ENCODE measurements at regions of chr9 and their contacts with region 1.

Region 1: DNA sequence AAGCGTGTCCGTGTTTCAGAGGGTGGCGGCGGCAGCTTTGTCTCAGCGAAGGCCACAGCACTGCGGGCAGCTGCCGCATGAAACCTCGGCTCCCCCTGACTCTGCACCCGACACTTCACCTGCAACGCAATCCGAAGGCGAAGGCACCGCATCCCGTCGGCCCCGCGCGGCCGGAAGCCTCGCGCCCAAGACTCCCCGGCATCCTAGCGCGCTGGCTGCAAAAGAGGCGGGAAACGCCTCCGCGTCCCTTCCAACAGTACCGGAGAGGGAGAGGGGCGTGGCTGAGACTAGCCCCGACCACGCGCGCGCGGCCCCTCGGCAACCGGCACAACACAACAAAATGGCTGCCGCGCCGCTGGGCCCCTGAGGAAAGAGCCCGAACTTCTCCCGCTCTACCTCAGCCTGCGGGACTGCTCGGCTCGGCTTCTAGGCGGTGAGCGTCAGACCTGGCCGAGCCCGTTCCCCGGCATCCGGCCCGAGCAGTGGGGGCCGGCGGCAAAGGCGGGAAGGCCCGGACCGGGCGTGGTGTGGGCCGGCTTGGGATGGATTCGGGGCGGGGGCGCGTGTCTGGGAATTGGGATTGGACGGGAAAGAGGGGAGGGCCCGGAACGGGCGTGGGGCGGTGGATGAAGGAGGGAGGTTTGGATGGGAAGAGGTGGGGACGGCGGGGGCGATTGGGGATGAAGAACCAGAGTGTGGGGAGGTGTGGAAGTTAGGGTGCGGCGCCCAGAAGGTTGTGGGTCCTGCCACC is at the start of gene CNTRL:
- DNase-seq: peak; percentile 54 to 93 (median 78)
- ATAC-seq: peak; percentile 81
- H3K4me3 ChIP-seq: peak within 1 kb of the TSS; percentile 92
- H3K4me3 Mint-ChIP-seq: peak within 1 kb of the TSS; percentile 89
- H3K27ac ChIP-seq: peak within 1 kb of the TSS; percentile 75 to 81
- H3K27ac Mint-ChIP-seq: peak within 1 kb of the TSS; percentile 98
- H3K4me1 ChIP-seq: peaks cover 30% of the 10 kb centered on the region
- H3K4me1 Mint-ChIP-seq: peaks cover 54% of the 10 kb centered on the region
- H3K27me3 ChIP-seq: no peaks in the 10 kb centered on the region
- H3K27me3 Mint-ChIP-seq: no peaks in the 10 kb centered on the region
- CTCF ChIP-seq: no peak
- total RNA-seq, gene CNTRL: 35.1 to 38.1 TPM

Region 2: GRCh38 chr9:120807607-120808379 is 267.0 kb before region 1 on chr9:
- CTCF ChIA-PET with region 1: no interaction called
- POLR2A ChIA-PET with region 1: no interaction called
- intact Hi-C with region 1: no loop called
- DNase-seq: no peak
- ATAC-seq: no peak
- H3K4me3 ChIP-seq: no peak overlapping the region
- H3K4me3 Mint-ChIP-seq: no peak overlapping the region
- H3K27ac ChIP-seq: no peak overlapping the region
- H3K27ac Mint-ChIP-seq: no peak overlapping the region
- H3K4me1 ChIP-seq: no peaks in the 10 kb centered on the region
- H3K4me1 Mint-ChIP-seq: no peaks in the 10 kb centered on the region
- H3K27me3 ChIP-seq: no peaks in the 10 kb centered on the region
- H3K27me3 Mint-ChIP-seq: no peaks in the 10 kb centered on the region
- CTCF ChIP-seq: no peak

Region 3: DNA sequence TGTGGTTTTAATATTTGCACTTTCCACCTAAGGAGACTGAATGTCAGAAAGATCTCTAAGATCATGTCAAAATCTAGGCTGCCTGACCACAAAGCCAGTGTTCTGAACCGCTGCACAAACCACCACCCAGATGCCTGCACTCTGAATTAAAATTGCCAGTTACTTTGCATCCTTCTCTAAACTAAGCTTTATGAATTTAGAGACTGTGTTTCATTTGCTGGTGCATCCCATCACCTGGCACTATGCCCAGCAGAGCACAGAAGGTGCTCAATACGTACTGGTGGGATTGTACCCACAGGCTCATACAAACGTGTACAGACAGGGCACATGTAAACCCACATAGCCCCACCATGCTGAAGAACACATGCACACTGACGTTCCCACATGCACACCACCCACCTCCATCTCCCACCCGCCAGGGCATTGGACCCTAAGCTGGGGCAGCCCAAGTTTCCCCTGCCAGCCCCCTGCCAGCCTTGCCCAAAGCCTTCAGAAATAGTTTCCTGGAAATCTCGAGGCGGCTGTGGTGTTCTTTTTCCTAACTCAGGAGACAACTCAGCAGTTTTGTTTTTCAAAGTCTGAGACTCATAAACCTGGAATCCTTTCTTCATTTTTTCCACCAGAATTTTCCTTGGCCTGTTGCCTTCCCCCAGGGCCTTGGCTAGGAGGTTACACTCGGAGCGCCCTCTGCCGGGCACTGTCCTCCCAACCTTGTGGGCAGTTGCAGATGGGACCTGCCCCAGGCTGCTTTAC is 138.6 kb before region 1 on chr9:
- CTCF ChIA-PET with region 1: no interaction called
- POLR2A ChIA-PET with region 1: interaction called, 7 read pairs
- intact Hi-C with region 1: loop called (anchors 5 kb)
- DNase-seq: peak; percentile 79 to 95 (median 88)
- ATAC-seq: peak; percentile 64
- H3K4me3 ChIP-seq: no peak overlapping the region
- H3K4me3 Mint-ChIP-seq: peak overlapping the region; percentile 46
- H3K27ac ChIP-seq: peak overlapping the region; percentile 45 to 100
- H3K27ac Mint-ChIP-seq: peak overlapping the region; percentile 100
- H3K4me1 ChIP-seq: peaks cover 56% of the 10 kb centered on the region
- H3K4me1 Mint-ChIP-seq: peaks cover 57% of the 10 kb centered on the region
- H3K27me3 ChIP-seq: no peaks in the 10 kb centered on the region
- H3K27me3 Mint-ChIP-seq: no peaks in the 10 kb centered on the region
- CTCF ChIP-seq: peak; percentile 94

Region 4: DNA sequence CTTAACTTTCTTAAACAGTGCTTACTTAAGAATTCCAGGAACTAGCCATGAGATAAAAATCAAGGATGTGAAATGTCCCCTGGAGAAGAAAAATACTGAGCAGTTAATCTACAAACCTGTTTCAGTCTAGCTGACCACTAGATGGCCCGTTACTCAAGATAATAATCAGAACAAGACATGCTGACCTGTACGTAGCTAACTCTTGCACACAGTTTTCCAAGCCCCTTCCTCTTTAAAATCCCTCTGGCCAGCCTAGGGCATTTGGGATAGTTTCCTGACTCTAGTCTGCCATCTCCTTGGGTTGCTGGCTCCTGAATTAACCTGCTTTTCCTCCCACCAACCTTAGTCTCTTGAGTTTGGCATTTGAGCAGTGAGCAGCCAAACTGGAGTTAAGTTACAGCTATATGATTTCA is 89.0 kb before region 1 on chr9:
- CTCF ChIA-PET with region 1: interaction called, 3 read pairs
- POLR2A ChIA-PET with region 1: interaction called, 3 read pairs
- intact Hi-C with region 1: loop called (anchors 5 kb)
- DNase-seq: peak in 1 of 14 experiments; percentile 4
- ATAC-seq: no peak
- H3K4me3 ChIP-seq: no peak overlapping the region
- H3K4me3 Mint-ChIP-seq: no peak overlapping the region
- H3K27ac ChIP-seq: no peak overlapping the region
- H3K27ac Mint-ChIP-seq: no peak overlapping the region
- H3K4me1 ChIP-seq: no peaks in the 10 kb centered on the region
- H3K4me1 Mint-ChIP-seq: peaks cover 5% of the 10 kb centered on the region
- H3K27me3 ChIP-seq: no peaks in the 10 kb centered on the region
- H3K27me3 Mint-ChIP-seq: no peaks in the 10 kb centered on the region
- CTCF ChIP-seq: no peak

Region 5: GRCh38 chr9:121115466-121115865 is 40.7 kb after region 1 on chr9:
- CTCF ChIA-PET with region 1: interaction called, 7 read pairs
- POLR2A ChIA-PET with region 1: no interaction called
- intact Hi-C with region 1: loop called (anchors 2 to 5 kb)
- DNase-seq: no peak
- ATAC-seq: no peak
- H3K4me3 ChIP-seq: no peak overlapping the region
- H3K4me3 Mint-ChIP-seq: no peak overlapping the region
- H3K27ac ChIP-seq: no peak overlapping the region
- H3K27ac Mint-ChIP-seq: no peak overlapping the region
- H3K4me1 ChIP-seq: no peaks in the 10 kb centered on the region
- H3K4me1 Mint-ChIP-seq: peaks cover 5% of the 10 kb centered on the region
- H3K27me3 ChIP-seq: no peaks in the 10 kb centered on the region
- H3K27me3 Mint-ChIP-seq: no peaks in the 10 kb centered on the region
- CTCF ChIP-seq: no peak

Measured in CD4-positive, alpha-beta T cell (primary cell).